ENCODE measurements at regions of chr17 and their contacts with region 1.

Region 1: DNA sequence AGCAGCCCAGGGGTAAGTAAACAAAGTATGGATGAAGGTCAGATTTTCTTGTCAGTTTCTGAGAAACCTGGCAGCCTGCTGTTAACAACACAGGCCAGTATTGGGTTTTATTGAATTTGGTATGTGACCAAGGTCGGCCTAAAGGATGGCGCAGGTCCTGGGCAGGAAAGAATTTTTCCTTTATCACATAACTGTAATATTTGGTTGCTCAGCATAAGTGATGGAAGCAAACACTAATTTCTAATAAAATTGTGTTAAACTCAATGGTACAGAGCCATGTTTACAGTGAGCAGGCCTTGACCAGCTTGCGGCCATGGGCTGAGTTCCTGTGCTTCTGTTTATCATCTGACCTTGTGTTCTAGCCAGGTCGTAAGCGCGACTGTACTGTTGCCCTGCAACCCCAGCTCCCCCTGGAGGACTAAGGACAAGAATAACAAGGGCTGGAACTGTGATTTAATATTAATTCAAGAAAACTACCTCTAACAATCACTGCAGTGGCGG is 10.5 kb downstream of the POLDIP2 start:
- DNase-seq: no peak
- H3K4me3 ChIP-seq: no peak overlapping the region
- H3K27ac ChIP-seq: no peak overlapping the region
- H3K4me1 ChIP-seq: peaks cover 0 to 4% (median 0%) of the 10 kb centered on the region in 4 experiments; a peak in 3 of 7 replicates
- H3K27me3 ChIP-seq: no peaks in the 10 kb centered on the region
- CTCF ChIP-seq: peak; percentile 21 to 33 (median 22); a peak in 3 of 4 replicates
- EP300 ChIP-seq: no peak
- POLR2A ChIP-seq: no peak
- RAD21 ChIP-seq: peak; percentile 26 to 51; a peak in 3 of 4 replicates

Region 2: GRCh38 chr17:28335201-28335955 is 11.4 kb before region 1 on chr17 and contains the starts of genes IFT20 and TNFAIP1:
- CTCF ChIA-PET with region 1: interaction called, 10 read pairs
- POLR2A ChIA-PET with region 1: interaction called, 19 read pairs
- DNase-seq: peak; percentile 94 to 100
- H3K4me3 ChIP-seq: peak within 1 kb of the TSS; percentile 87 to 95 (median 92)
- H3K27ac ChIP-seq: peak within 1 kb of the TSS; percentile 72
- H3K4me1 ChIP-seq: peaks cover 0 to 10% (median 8%) of the 10 kb centered on the region in 4 experiments; a peak in 6 of 7 replicates
- H3K27me3 ChIP-seq: no peaks in the 10 kb centered on the region
- CTCF ChIP-seq: no peak
- EP300 ChIP-seq: peak in 1 of 2 experiments; percentile 78; a peak in 1 of 3 replicates
- POLR2A ChIP-seq: peak in 1 of 2 experiments; percentile 64; a peak in 2 of 3 replicates
- RAD21 ChIP-seq: no peak
- total RNA-seq, gene IFT20: 19.3 and 21.0 TPM in 2 replicates
- total RNA-seq, gene TNFAIP1: 19.5 and 22.8 TPM in 2 replicates

Region 3: GRCh38 chr17:28363776-28364650 is 17.2 kb after region 1 on chr17:
- CTCF ChIA-PET with region 1: interaction called, 4 read pairs
- POLR2A ChIA-PET with region 1: interaction called, 92 read pairs
- DNase-seq: no peak
- H3K4me3 ChIP-seq: no peak overlapping the region
- H3K27ac ChIP-seq: no peak overlapping the region
- H3K4me1 ChIP-seq: no peaks in the 10 kb centered on the region
- H3K27me3 ChIP-seq: no peaks in the 10 kb centered on the region
- CTCF ChIP-seq: no peak
- EP300 ChIP-seq: no peak
- POLR2A ChIP-seq: no peak
- RAD21 ChIP-seq: no peak

Region 4: GRCh38 chr17:28371245-28372202 is 24.7 kb after region 1 on chr17 and contains the start of gene SARM1:
- CTCF ChIA-PET with region 1: interaction called, 3 read pairs
- POLR2A ChIA-PET with region 1: interaction called, 21 read pairs
- DNase-seq: peak; percentile 92 to 99
- H3K4me3 ChIP-seq: peak within 1 kb of the TSS; percentile 56 to 79 (median 74)
- H3K27ac ChIP-seq: no peak within 1 kb of the TSS
- H3K4me1 ChIP-seq: peaks cover 3 to 16% (median 9%) of the 10 kb centered on the region in 4 experiments; a peak in 6 of 7 replicates
- H3K27me3 ChIP-seq: peaks cover 9 to 19% (median 19%) of the 10 kb centered on the region in 4 experiments
- CTCF ChIP-seq: no peak
- EP300 ChIP-seq: no peak
- POLR2A ChIP-seq: no peak
- RAD21 ChIP-seq: no peak
- total RNA-seq, gene SARM1: 6.5 and 9.2 TPM in 2 replicates

Measured in H1 (cell line).